ENCODE measurements at regions of chr20 and their contacts with region 1.

Region 1: GRCh38 chr20:35215066-35215956 is 11.2 kb upstream of the MMP24 start:
- DNase-seq: no peak
- H3K4me3 ChIP-seq: no peak overlapping the region
- H3K27ac ChIP-seq: no peak overlapping the region
- H3K4me1 ChIP-seq: no peaks in the 10 kb centered on the region
- H3K27me3 ChIP-seq: no peaks in the 10 kb centered on the region
- CTCF ChIP-seq: no peak
- POLR2A ChIP-seq: no peak

Region 2: GRCh38 chr20:35269055-35269781 is 53.9 kb after region 1 on chr20:
- intact Hi-C with region 1: loop called (anchors 10 kb)
- DNase-seq: no peak
- H3K4me3 ChIP-seq: no peak overlapping the region
- H3K27ac ChIP-seq: no peak overlapping the region
- H3K4me1 ChIP-seq: peaks cover 0 to 7% (median 0%) of the 10 kb centered on the region in 3 donors
- H3K27me3 ChIP-seq: no peaks in the 10 kb centered on the region
- CTCF ChIP-seq: peak; percentile 49 to 65 (median 53)
- POLR2A ChIP-seq: no peak